ENCODE measurements at regions of chr19 and their contacts with region 1.

Region 1: DNA sequence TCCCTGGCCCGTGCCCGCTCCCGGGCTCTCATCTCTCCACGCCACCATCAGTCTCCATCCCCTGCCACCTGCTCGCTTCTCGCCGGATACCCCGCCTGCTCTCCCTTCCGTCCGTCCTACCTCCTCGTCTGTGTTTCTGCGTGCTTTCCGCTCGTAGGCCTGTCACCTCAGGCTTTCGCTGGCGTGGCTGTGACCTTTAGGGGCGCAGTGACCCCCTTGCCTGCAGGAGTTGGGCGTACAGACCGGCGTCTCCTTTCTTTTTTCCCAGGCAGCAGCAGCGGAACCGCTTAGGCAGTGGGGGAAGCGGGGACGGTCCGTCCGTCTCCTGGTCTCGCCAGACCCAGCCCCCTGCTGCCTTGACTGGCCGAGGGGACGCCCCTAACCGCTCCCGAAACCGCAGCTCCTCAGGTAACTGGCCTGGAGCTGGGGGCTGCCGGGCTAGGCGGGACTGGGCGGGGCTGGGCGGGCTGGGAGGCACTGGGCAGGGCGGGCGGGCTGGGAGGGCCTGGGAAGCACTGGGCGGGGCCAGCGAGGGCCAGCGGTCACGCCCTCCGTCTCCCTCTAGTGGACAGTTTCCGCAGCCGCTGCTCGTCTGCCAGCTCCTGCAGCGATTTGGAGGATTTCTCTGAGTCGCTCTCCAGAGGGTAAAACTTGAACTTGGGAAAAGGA is 6.3 kb downstream of the PGLYRP1 start:
- DNase-seq: peak; percentile 63 to 84 (median 72)
- H3K4me3 ChIP-seq: peak overlapping the region; percentile 45 to 81 (median 66)
- H3K27ac ChIP-seq: peak overlapping the region in 33 of 59 donors; percentile 2 to 76 (median 36)
- H3K27me3 ChIP-seq: peaks cover 0 to 8% (median 0%) of the 10 kb centered on the region in 45 donors
- CTCF ChIP-seq: peak; percentile 27 to 95 (median 86)

Region 2: DNA sequence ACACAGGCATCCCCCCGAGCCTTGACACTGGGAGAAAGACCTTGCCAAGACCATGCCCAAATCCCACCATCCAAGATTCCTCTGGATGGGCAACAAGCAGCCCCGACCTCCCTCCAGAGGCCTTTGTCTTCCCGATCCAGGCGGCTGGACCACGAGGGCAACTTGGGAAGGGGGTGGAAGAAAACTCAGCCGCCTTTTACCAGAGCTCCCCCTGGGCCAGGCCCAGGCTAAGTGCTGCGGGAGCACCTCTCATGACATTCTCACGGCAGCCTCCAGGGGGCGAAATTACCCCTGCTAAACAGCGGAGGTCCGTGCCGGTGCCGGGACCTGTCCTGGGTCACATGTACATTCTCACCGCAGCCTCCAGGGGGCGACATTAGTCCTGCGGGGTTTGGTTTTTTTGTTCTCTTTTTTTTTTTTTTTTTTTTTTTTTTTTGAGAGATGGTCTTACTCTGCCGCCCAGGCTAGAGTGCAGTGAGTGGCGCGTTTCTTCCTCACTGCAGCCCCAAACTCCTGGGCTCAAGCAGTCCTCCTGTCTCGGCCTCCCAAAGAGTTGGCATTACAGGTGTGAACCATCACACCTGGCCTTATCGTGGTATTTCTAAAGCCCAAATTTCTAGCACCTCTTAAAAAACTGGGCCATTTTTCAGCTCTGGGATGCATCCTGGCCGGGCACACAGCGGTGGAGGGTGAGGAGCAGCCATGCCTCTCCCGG is 199.4 kb before region 1 on chr19:
- intact Hi-C with region 1: loop called in 1 of 2 experiments (anchors 5 kb)
- DNase-seq: peak; percentile 60 to 90 (median 80)
- H3K4me3 ChIP-seq: no peak overlapping the region
- H3K27ac ChIP-seq: peak overlapping the region in 3 of 59 donors; percentile 13 to 44 (median 18)
- H3K27me3 ChIP-seq: no peaks in the 10 kb centered on the region
- CTCF ChIP-seq: peak; percentile 80 to 98 (median 93)

Region 3: GRCh38 chr19:45902651-45903625 is 113.6 kb before region 1 on chr19:
- intact Hi-C with region 1: loop called (anchors 5 kb)
- DNase-seq: peak; percentile 91 to 99 (median 95)
- H3K4me3 ChIP-seq: peak overlapping the region; percentile 57 to 99 (median 85)
- H3K27ac ChIP-seq: peak overlapping the region; percentile 71 to 99 (median 94)
- H3K27me3 ChIP-seq: no peaks in the 10 kb centered on the region
- CTCF ChIP-seq: peak in 29 of 56 donors; percentile 5 to 55 (median 23)

Region 4: GRCh38 chr19:45973578-45974338 is 42.8 kb before region 1 on chr19 and contains the start of gene NOVA2:
- intact Hi-C with region 1: loop called in 1 of 2 experiments (anchors 5 kb)
- DNase-seq: peak; percentile 85 to 96 (median 94)
- H3K4me3 ChIP-seq: peak within 1 kb of the TSS; percentile 42 to 80 (median 67)
- H3K27ac ChIP-seq: peak within 1 kb of the TSS in 56 of 59 donors; percentile 0 to 97 (median 86)
- H3K27me3 ChIP-seq: no peaks in the 10 kb centered on the region
- CTCF ChIP-seq: peak in 11 of 56 donors; percentile 8 to 39 (median 16)
- total RNA-seq, gene NOVA2: 41.1 to 95.4 (median 71.8) TPM

Region 5: GRCh38 chr19:46049597-46049996 is 33.0 kb after region 1 on chr19:
- intact Hi-C with region 1: no loop called
- DNase-seq: no peak
- H3K4me3 ChIP-seq: no peak overlapping the region
- H3K27ac ChIP-seq: no peak overlapping the region
- H3K27me3 ChIP-seq: peaks cover 0 to 3% (median 0%) of the 10 kb centered on the region in 45 donors
- CTCF ChIP-seq: no peak

Region 6: GRCh38 chr19:46081928-46082727 is 65.6 kb after region 1 on chr19:
- intact Hi-C with region 1: no loop called
- DNase-seq: no peak
- H3K4me3 ChIP-seq: peak overlapping the region in 14 of 59 donors; percentile 0 to 33 (median 16)
- H3K27ac ChIP-seq: peak overlapping the region in 1 of 59 donors; percentile 14
- H3K27me3 ChIP-seq: peaks cover 0 to 5% (median 0%) of the 10 kb centered on the region in 45 donors
- CTCF ChIP-seq: peak; percentile 34 to 82 (median 66)

Measured in dorsolateral prefrontal cortex (tissue), 120 donors.